Activated CD4-positive, alpha-beta memory T cell treated with anti-CD3 and anti-CD28 coated beads for 36 hours (primary cell): ENCODE measurements at regions of chr12 and their contacts with region 1.

Region 1: DNA sequence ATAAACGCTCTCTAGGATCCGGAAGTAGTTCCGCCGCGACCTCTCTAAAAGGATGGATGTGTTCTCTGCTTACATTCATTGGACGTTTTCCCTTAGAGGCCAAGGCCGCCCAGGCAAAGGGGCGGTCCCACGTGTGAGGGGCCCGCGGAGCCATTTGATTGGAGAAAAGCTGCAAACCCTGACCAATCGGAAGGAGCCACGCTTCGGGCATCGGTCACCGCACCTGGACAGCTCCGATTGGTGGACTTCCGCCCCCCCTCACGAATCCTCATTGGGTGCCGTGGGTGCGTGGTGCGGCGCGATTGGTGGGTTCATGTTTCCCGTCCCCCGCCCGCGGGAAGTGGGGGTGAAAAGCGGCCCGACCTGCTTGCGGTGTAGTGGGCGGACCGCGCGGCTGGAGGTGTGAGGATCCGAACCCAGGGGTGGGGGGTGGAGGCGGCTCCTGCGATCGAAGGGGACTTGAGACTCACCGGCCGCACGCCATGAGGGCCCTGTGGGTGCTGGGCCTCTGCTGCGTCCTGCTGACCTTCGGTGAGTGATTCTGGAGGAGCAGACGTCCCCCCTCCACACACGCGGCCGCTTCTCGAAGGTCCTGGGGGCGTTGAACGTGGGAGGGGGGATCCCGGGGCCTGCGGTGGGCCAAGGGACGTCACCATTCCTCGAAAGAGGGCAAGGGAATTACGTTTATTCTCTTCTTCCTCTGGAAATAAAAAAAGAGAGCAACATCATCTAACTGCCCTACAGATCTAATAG is at the start of gene HSP90B1:
- DNase-seq: peak; percentile 100
- H3K4me3 Mint-ChIP-seq: peak within 1 kb of the TSS; percentile 86
- H3K27ac Mint-ChIP-seq: peak within 1 kb of the TSS; percentile 97
- H3K4me1 Mint-ChIP-seq: peaks cover 60% of the 10 kb centered on the region
- H3K27me3 Mint-ChIP-seq: no peaks in the 10 kb centered on the region
- total RNA-seq, gene HSP90B1: 452 to 453 TPM

Region 2: DNA sequence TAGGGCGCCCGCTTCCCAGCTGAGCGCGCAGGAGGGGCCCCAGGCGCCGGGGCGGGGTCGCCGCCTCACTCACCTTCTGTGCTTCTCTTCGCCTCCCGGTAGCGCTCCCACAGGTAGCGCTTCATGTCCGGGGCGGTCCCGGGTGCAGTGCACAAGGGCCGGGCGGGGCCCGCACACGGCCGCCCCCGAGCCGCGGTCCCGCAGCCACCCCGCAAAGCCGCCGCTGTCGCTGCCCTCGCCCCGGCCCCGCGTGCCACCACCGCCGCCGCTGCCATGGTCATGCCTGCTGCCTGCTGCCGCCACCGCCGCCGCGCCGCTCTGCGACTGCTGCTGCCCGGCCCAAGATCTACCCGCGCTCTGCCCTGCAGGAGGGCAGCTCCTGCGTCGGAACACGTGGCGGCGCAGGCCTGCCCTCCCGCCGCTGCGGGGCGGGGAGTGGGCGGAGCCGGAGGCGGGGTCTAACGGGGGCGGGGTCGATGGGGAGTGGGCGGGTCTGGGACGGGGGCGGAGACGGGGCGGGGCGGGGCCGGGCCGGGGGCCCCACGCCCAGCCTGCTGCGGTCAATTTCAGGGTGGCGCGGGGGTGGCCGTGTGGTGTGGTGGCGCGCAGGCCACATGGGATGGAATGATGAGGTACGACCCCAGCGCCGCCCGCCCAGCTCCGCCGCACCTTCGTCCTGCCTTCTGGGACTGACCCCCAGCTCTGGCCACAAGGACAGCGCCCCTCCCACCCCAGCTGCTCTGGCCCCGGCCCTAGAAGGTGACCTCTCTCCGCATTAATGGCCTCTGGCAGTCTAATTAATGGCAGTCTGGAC is 89.1 kb before region 1 on chr12 and contains the start of gene NT5DC3:
- CTCF ChIA-PET with region 1: no interaction called
- POLR2A ChIA-PET with region 1: interaction called, 3 read pairs
- intact Hi-C with region 1: loop called (anchors 1 kb)
- DNase-seq: peak; percentile 89
- H3K4me3 Mint-ChIP-seq: peak within 1 kb of the TSS; percentile 76
- H3K27ac Mint-ChIP-seq: peak within 1 kb of the TSS; percentile 31
- H3K4me1 Mint-ChIP-seq: peaks cover 13% of the 10 kb centered on the region
- H3K27me3 Mint-ChIP-seq: no peaks in the 10 kb centered on the region
- total RNA-seq, gene NT5DC3: 6.8 to 7.5 TPM

Region 3: GRCh38 chr12:103956516-103957027 is 26.4 kb after region 1 on chr12:
- CTCF ChIA-PET with region 1: interaction called, 3 read pairs
- POLR2A ChIA-PET with region 1: interaction called, 19 read pairs
- intact Hi-C with region 1: loop called (anchors 1 kb)
- DNase-seq: no peak
- H3K4me3 Mint-ChIP-seq: peak overlapping the region; percentile 97
- H3K27ac Mint-ChIP-seq: peak overlapping the region; percentile 94
- H3K4me1 Mint-ChIP-seq: peaks cover 38% of the 10 kb centered on the region
- H3K27me3 Mint-ChIP-seq: no peaks in the 10 kb centered on the region

Region 4: DNA sequence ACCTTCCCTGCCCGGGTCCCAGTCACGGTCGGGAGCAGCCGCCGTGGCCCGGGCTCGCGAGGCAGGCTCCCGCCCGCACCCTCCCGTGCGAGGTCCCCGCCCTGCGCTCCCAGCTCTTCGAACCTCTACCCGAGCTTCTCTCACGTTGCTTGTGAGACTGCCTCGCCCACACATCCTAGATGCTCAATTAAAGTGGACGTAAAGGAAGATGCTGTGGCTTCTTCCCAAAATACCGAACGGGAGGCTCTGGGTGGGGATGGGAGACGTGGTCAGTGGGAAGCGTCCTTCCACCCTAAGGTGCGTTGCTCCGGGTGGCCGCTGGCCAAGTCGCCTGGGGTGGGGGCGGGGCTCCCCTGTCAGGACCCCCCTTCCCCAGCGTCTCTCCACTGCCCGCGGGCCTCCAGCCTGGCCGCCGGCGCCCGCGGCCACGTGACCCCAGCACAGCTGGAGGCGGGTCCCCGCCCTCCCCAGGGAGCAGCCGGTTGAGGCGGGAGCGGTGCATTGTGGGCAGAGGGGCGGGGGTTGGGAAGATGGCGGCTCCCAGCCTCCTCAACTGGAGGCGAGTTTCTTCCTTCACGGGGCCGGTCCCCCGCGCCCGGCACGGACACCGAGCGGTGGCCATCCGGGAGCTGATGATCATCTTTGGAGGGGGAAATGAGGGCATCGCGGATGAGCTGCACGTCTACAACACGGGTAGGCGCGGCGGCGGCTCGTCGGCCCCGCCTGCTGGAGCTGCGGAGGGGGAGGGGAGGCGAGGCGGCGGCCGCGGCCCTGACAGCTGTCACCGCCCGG is 134.0 kb after region 1 on chr12 and contains the start of gene HCFC2:
- CTCF ChIA-PET with region 1: no interaction called
- POLR2A ChIA-PET with region 1: interaction called, 6 read pairs
- intact Hi-C with region 1: loop called (anchors 1 kb)
- DNase-seq: peak; percentile 93
- H3K4me3 Mint-ChIP-seq: peak within 1 kb of the TSS; percentile 97
- H3K27ac Mint-ChIP-seq: peak within 1 kb of the TSS; percentile 81
- H3K4me1 Mint-ChIP-seq: peaks cover 21% of the 10 kb centered on the region
- H3K27me3 Mint-ChIP-seq: peaks cover 12% of the 10 kb centered on the region
- total RNA-seq, gene HCFC2: 8.9 to 10.8 TPM

Region 5: DNA sequence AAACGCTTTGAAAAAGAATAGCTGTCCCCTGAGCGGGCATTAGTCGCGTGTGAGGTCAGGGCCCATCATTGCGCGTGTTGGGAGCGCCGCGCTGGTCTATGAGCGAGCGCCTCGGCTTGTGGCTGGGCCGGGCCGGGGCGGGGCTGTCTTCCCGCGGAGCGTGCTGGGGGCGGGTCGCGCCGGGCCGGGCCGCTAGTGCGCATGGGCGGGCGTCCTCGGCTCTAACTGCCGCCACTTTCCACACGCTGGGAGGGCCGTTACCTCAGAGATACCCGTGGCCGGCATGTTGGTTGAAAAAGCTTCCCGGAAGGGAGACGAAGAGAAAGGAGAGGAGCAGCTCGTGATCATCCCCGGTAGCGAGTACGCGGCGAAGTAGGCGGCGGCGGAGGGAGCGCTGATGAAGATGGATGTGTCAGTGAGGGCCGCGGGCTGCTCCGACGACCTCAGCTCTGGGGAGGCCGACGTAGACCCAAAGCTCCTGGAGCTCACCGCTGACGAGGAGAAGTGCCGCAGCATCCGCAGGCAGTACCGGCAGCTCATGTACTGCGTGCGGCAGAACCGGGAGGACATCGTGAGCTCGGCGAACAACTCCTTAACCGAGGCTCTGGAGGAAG is 373.4 kb after region 1 on chr12 and contains the start of gene EID3:
- CTCF ChIA-PET with region 1: no interaction called
- POLR2A ChIA-PET with region 1: no interaction called
- intact Hi-C with region 1: no loop called
- DNase-seq: peak; percentile 94
- H3K4me3 Mint-ChIP-seq: peak within 1 kb of the TSS; percentile 89
- H3K27ac Mint-ChIP-seq: peak within 1 kb of the TSS; percentile 93
- H3K4me1 Mint-ChIP-seq: peaks cover 60% of the 10 kb centered on the region
- H3K27me3 Mint-ChIP-seq: no peaks in the 10 kb centered on the region
- total RNA-seq, gene EID3: 4.7 TPM

Region 6: GRCh38 chr12:105107494-105108371 is 1177.5 kb after region 1 on chr12 and contains the start of gene WASHC4:
- CTCF ChIA-PET with region 1: no interaction called
- POLR2A ChIA-PET with region 1: no interaction called
- intact Hi-C with region 1: loop called (anchors 5 kb)
- DNase-seq: peak; percentile 96
- H3K4me3 Mint-ChIP-seq: peak within 1 kb of the TSS; percentile 90
- H3K27ac Mint-ChIP-seq: peak within 1 kb of the TSS; percentile 88
- H3K4me1 Mint-ChIP-seq: peaks cover 40% of the 10 kb centered on the region
- H3K27me3 Mint-ChIP-seq: peaks cover 11% of the 10 kb centered on the region
- total RNA-seq, gene WASHC4: 34.2 to 36.8 TPM